MCF 10A (cell line): ENCODE measurements at regions of chr19 and their contacts with region 1.

Region 1: GRCh38 chr19:38304866-38305429 is 897 bp downstream of the C19orf33 start:
- DNase-seq: peak; percentile 99
- H3K4me3 Mint-ChIP-seq: peak overlapping the region; percentile 89
- H3K27ac Mint-ChIP-seq: peak overlapping the region; percentile 91
- H3K4me1 Mint-ChIP-seq: peaks cover 17% of the 10 kb centered on the region
- H3K27me3 Mint-ChIP-seq: no peaks in the 10 kb centered on the region
- CTCF ChIP-seq: no peak

Region 2: DNA sequence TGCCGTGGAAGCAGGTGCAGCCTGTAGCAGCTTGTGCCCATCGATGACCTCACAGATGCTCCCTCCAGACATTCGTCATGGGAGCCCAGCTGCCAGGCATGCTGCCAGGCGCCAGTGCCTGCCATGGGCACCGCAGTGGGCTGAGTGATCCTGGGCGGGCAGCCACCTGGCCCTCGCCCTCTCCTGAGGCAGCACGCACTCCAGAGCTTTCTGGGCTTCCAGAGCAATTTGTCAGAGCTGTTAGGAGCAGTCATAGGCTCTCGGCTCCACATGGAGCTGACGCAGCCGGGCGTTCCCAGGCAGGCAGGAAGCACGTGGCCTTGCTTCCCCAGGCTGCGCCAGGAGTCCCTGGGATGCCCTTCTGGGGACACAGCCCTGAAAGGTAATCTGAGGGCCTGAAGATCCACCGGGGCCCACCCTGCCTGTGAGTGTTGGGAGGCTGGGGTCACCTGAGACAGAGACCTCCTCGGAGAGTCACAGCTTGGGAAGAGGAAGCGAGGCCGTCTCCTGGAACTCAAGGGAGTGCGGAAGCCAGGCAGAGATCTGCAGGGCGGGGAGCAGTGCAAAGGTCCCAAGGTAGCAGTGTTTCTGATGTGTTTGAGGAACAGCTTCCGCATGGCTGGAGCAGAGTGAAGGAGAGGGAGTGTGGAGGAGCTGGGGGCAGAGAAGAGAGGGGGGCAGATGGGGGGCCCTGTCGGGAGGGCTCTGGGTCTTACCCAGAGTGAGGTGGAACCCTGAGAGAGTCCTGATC is 131.5 kb before region 1 on chr19:
- CTCF ChIA-PET with region 1: no interaction called
- POLR2A ChIA-PET with region 1: no interaction called
- intact Hi-C with region 1: no loop called
- DNase-seq: peak; percentile 99
- H3K4me3 Mint-ChIP-seq: peak overlapping the region; percentile 79
- H3K27ac Mint-ChIP-seq: peak overlapping the region; percentile 97
- H3K4me1 Mint-ChIP-seq: peaks cover 19% of the 10 kb centered on the region
- H3K27me3 Mint-ChIP-seq: no peaks in the 10 kb centered on the region
- CTCF ChIP-seq: no peak

Region 3: DNA sequence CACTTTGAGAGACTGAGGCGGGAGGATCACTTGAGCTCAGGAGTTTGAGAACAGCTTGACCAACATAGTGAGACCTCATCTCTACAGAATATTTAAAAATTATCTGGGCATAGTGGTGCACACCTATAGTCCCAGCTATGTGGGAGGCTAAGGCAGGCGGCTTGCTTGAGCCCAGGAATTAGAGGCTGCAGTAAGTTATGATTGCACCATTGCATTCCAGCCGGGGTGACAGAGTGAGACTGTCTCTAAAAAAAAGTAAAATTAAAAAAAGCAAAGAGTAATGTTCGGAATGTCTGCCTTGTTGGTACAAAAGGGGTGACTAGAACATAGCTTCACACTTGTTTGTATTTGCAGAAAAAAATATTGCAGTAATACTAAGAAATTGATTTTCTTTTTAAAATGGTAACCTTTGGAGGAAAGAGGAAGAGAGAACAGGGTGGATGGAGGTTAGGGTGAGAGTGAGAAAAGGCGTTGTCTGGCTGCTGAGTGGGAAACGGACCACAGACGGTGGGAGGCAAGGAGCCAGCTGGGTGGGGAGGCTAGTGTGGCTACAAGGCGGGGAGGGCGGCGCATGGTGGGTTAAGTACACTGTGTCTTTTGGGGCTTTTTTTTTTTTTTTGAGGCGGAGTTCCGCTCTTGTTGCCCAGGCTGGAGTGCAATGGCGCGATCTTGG is 59.0 kb before region 1 on chr19:
- CTCF ChIA-PET with region 1: interaction called, 9 read pairs
- POLR2A ChIA-PET with region 1: interaction called, 12 read pairs
- intact Hi-C with region 1: no loop called
- DNase-seq: no peak
- H3K4me3 Mint-ChIP-seq: no peak overlapping the region
- H3K27ac Mint-ChIP-seq: no peak overlapping the region
- H3K4me1 Mint-ChIP-seq: peaks cover 16% of the 10 kb centered on the region
- H3K27me3 Mint-ChIP-seq: no peaks in the 10 kb centered on the region
- CTCF ChIP-seq: no peak

Region 4: DNA sequence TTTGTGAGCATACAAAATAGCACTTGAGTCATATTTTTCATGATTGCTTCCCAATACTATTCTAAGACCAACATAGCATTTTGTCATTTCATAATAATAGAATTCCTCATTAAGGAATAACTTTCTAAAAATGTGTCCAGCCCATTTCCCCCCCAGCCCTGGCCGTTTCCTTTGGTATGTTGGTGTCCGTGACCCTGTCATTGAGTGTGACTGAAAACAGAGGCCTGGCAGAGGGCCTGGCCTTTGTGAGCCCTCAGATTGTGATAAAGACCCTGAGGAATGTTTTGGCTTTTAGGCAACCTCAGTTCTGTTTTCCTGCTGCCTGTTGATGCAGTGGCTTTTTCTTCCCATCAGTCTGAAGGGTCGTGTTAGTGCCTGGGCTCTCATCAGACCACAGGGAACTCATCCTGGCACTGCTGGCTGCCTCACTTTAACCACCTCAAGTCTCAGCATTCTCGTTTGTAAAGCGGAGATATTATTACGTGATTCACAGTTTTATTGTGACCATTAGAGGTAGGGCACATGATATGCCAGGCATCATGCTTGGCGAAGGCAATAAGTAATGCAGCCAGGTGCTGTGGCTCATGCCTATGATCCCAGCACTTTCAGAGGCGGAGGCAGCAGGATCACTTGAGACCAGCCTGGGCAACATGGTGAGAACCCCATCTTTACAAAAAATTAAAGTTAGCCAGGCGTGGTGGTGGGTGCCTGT is 26.8 kb before region 1 on chr19:
- CTCF ChIA-PET with region 1: no interaction called
- POLR2A ChIA-PET with region 1: interaction called, 13 read pairs
- intact Hi-C with region 1: no loop called
- DNase-seq: no peak
- H3K4me3 Mint-ChIP-seq: no peak overlapping the region
- H3K27ac Mint-ChIP-seq: peak overlapping the region; percentile 27
- H3K4me1 Mint-ChIP-seq: peaks cover 11% of the 10 kb centered on the region
- H3K27me3 Mint-ChIP-seq: no peaks in the 10 kb centered on the region
- CTCF ChIP-seq: no peak

Region 5: GRCh38 chr19:38290631-38291157 is 14.3 kb before region 1 on chr19:
- CTCF ChIA-PET with region 1: interaction called, 3 read pairs
- POLR2A ChIA-PET with region 1: interaction called, 10 read pairs
- intact Hi-C with region 1: no loop called
- DNase-seq: peak; percentile 88
- H3K4me3 Mint-ChIP-seq: peak overlapping the region; percentile 3
- H3K27ac Mint-ChIP-seq: peak overlapping the region; percentile 11
- H3K4me1 Mint-ChIP-seq: peaks cover 13% of the 10 kb centered on the region
- H3K27me3 Mint-ChIP-seq: no peaks in the 10 kb centered on the region
- CTCF ChIP-seq: no peak

Region 6: GRCh38 chr19:38315657-38316476 is 10.9 kb after region 1 on chr19 and contains the start of gene YIF1B:
- CTCF ChIA-PET with region 1: interaction called, 4 read pairs
- POLR2A ChIA-PET with region 1: interaction called, 49 read pairs
- intact Hi-C with region 1: loop called (anchors 1 kb)
- DNase-seq: peak; percentile 98
- H3K4me3 Mint-ChIP-seq: peak within 1 kb of the TSS; percentile 82
- H3K27ac Mint-ChIP-seq: peak within 1 kb of the TSS; percentile 88
- H3K4me1 Mint-ChIP-seq: peaks cover 15% of the 10 kb centered on the region
- H3K27me3 Mint-ChIP-seq: no peaks in the 10 kb centered on the region
- CTCF ChIP-seq: no peak
- total RNA-seq, gene YIF1B: 49.2 and 60.3 TPM in 2 replicates

Region 7: DNA sequence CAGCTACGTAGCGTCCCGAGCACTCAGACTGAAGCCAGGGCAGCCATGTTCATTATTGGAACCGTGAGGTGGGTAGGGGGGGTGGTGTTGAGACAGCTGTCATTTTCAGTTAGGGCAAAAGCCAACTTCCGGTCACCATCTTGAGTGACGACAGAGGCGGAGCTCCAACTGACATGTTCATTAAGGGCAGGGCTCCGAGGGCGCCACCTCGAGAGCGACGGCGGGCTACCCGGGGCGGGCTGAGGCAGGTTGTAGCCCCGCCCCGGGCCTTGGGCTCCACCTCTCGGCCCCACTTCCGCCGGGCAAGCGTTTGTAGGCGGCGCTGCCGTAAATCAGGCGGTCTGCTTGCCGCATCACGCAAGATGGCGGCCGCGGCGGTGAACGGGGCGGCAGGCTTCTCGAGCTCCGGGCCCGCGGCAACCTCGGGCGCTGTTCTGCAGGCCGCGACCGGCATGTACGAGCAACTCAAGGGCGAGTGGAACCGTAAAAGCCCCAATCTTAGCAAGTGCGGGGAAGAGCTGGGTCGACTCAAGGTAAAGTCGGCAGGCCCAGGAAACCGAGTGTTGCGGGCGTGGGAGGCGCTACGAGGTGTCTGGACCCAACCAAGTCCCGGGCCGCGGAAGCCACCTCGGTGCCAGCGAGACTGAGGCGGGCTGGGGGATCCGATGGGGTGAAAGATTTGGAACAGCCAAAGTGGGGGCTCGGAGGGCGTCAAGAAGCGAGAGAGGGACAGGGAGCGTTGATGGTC is 69.7 kb after region 1 on chr19 and contains the start of gene PSMD8:
- CTCF ChIA-PET with region 1: no interaction called
- POLR2A ChIA-PET with region 1: interaction called, 37 read pairs
- intact Hi-C with region 1: no loop called
- DNase-seq: peak; percentile 100
- H3K4me3 Mint-ChIP-seq: peak within 1 kb of the TSS; percentile 84
- H3K27ac Mint-ChIP-seq: peak within 1 kb of the TSS; percentile 98
- H3K4me1 Mint-ChIP-seq: peaks cover 19% of the 10 kb centered on the region
- H3K27me3 Mint-ChIP-seq: no peaks in the 10 kb centered on the region
- CTCF ChIP-seq: no peak
- total RNA-seq, gene PSMD8: 289 and 311 TPM in 2 replicates